B cell (primary cell): ENCODE measurements at regions of chr11 and their contacts with region 1.

Region 1: GRCh38 chr11:101860696-101861427 is 53.9 kb upstream of the CEP126 start:
- DNase-seq: peak; percentile 52
- ATAC-seq: peak; percentile 70
- H3K4me3 ChIP-seq: no peak overlapping the region
- H3K4me3 Mint-ChIP-seq: no peak overlapping the region
- H3K27ac ChIP-seq: no peak overlapping the region
- H3K27ac Mint-ChIP-seq: no peak overlapping the region
- H3K4me1 ChIP-seq: no peaks in the 10 kb centered on the region
- H3K4me1 Mint-ChIP-seq: no peaks in the 10 kb centered on the region
- H3K27me3 ChIP-seq: peaks cover 0 to 9% (median 1%) of the 10 kb centered on the region in 4 experiments
- H3K27me3 Mint-ChIP-seq: peaks cover 21% of the 10 kb centered on the region
- CTCF ChIP-seq: peak; percentile 88

Region 2: GRCh38 chr11:101456812-101457211 is 404.1 kb before region 1 on chr11:
- CTCF ChIA-PET with region 1: interaction called, 10 read pairs
- POLR2A ChIA-PET with region 1: no interaction called
- intact Hi-C with region 1: no loop called
- DNase-seq: peak; percentile 13
- ATAC-seq: no peak
- H3K4me3 ChIP-seq: no peak overlapping the region
- H3K4me3 Mint-ChIP-seq: no peak overlapping the region
- H3K27ac ChIP-seq: no peak overlapping the region
- H3K27ac Mint-ChIP-seq: no peak overlapping the region
- H3K4me1 ChIP-seq: no peaks in the 10 kb centered on the region
- H3K4me1 Mint-ChIP-seq: no peaks in the 10 kb centered on the region
- H3K27me3 ChIP-seq: no peaks in the 10 kb centered on the region
- H3K27me3 Mint-ChIP-seq: peaks cover under 1% of the 10 kb centered on the region
- CTCF ChIP-seq: peak; percentile 24

Region 3: GRCh38 chr11:101775033-101775432 is 85.8 kb before region 1 on chr11:
- CTCF ChIA-PET with region 1: no interaction called
- POLR2A ChIA-PET with region 1: no interaction called
- intact Hi-C with region 1: no loop called
- DNase-seq: no peak
- ATAC-seq: no peak
- H3K4me3 ChIP-seq: no peak overlapping the region
- H3K4me3 Mint-ChIP-seq: no peak overlapping the region
- H3K27ac ChIP-seq: no peak overlapping the region
- H3K27ac Mint-ChIP-seq: no peak overlapping the region
- H3K4me1 ChIP-seq: no peaks in the 10 kb centered on the region
- H3K4me1 Mint-ChIP-seq: no peaks in the 10 kb centered on the region
- H3K27me3 ChIP-seq: no peaks in the 10 kb centered on the region
- H3K27me3 Mint-ChIP-seq: no peaks in the 10 kb centered on the region
- CTCF ChIP-seq: no peak

Region 4: GRCh38 chr11:101880222-101880621 is 19.4 kb after region 1 on chr11:
- CTCF ChIA-PET with region 1: interaction called, 23 read pairs
- POLR2A ChIA-PET with region 1: no interaction called
- intact Hi-C with region 1: no loop called
- DNase-seq: peak; percentile 30
- ATAC-seq: no peak
- H3K4me3 ChIP-seq: no peak overlapping the region
- H3K4me3 Mint-ChIP-seq: no peak overlapping the region
- H3K27ac ChIP-seq: no peak overlapping the region
- H3K27ac Mint-ChIP-seq: no peak overlapping the region
- H3K4me1 ChIP-seq: no peaks in the 10 kb centered on the region
- H3K4me1 Mint-ChIP-seq: no peaks in the 10 kb centered on the region
- H3K27me3 ChIP-seq: peaks cover 0 to 11% (median 4%) of the 10 kb centered on the region in 4 experiments
- H3K27me3 Mint-ChIP-seq: peaks cover 48% of the 10 kb centered on the region
- CTCF ChIP-seq: peak; percentile 33

Region 5: GRCh38 chr11:102001657-102002338 is 140.9 kb after region 1 on chr11:
- CTCF ChIA-PET with region 1: interaction called, 423 read pairs
- POLR2A ChIA-PET with region 1: no interaction called
- intact Hi-C with region 1: no loop called
- DNase-seq: no peak
- ATAC-seq: no peak
- H3K4me3 ChIP-seq: no peak overlapping the region
- H3K4me3 Mint-ChIP-seq: no peak overlapping the region
- H3K27ac ChIP-seq: no peak overlapping the region
- H3K27ac Mint-ChIP-seq: no peak overlapping the region
- H3K4me1 ChIP-seq: no peaks in the 10 kb centered on the region
- H3K4me1 Mint-ChIP-seq: no peaks in the 10 kb centered on the region
- H3K27me3 ChIP-seq: no peaks in the 10 kb centered on the region
- H3K27me3 Mint-ChIP-seq: no peaks in the 10 kb centered on the region
- CTCF ChIP-seq: no peak

Region 6: GRCh38 chr11:102666331-102666957 is 805.6 kb after region 1 on chr11:
- CTCF ChIA-PET with region 1: interaction called, 28 read pairs
- POLR2A ChIA-PET with region 1: no interaction called
- intact Hi-C with region 1: loop called (anchors 2 kb)
- DNase-seq: peak; percentile 55
- ATAC-seq: peak; percentile 36
- H3K4me3 ChIP-seq: no peak overlapping the region
- H3K4me3 Mint-ChIP-seq: no peak overlapping the region
- H3K27ac ChIP-seq: no peak overlapping the region
- H3K27ac Mint-ChIP-seq: no peak overlapping the region
- H3K4me1 ChIP-seq: peaks cover 0 to 5% of the 10 kb centered on the region in 2 donors
- H3K4me1 Mint-ChIP-seq: no peaks in the 10 kb centered on the region
- H3K27me3 ChIP-seq: no peaks in the 10 kb centered on the region
- H3K27me3 Mint-ChIP-seq: peaks cover 3% of the 10 kb centered on the region
- CTCF ChIP-seq: peak; percentile 82